HCT116 (cell line): ENCODE measurements at regions of chr16 and their contacts with region 1.

Region 1: DNA sequence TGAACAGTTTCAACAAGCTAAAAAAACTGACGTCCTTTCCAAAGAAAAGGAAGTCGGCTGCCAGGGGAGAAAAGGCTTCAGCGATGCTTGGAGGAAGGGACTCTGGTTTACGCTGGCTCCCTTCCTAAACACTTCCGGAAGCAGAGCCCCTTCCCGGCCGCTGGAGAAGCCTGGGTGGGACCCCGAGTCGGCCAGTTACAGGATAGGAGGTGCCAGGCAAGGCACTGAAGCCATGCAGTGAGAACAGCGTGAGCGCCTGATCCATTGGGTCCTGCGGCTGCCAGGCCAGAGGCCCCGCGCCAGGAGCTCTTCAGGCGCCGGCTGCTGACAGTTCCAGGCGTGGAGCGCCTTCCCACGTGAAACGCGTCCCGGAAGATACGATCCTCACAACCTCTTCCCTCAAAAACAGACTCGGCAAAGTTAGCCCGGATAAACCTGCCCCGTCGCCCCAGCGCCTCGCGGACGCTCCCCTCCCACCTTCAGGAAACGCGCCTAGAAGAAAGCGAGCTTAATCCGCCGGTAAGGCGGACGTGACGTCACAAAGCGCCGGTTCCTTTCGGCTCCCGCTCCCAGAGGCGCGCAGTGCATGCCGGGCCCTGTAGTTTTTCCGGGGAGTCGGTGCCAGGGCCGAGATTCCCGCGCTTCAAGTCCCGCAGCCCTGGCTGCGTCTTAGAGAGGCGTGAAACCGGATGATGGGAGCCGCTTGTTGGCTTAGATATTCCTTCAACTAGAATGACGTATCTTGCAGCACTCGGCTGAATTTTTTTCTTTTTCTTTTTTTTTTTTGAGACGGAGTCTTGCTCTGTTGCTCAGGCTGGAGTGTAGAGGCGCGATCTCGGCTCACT is at the start of gene ADAT1:
- DNase-seq: peak; percentile 96
- ATAC-seq: peak; percentile 95
- H3K4me3 ChIP-seq: peak within 1 kb of the TSS; percentile 75 to 79
- H3K27ac ChIP-seq: peak within 1 kb of the TSS; percentile 86
- H3K4me1 ChIP-seq: peaks cover 8 to 19% of the 10 kb centered on the region in 2 experiments
- H3K27me3 ChIP-seq: no peaks in the 10 kb centered on the region
- CTCF ChIP-seq: no peak
- POLR2A ChIP-seq: peak; percentile 78
- RAD21 ChIP-seq: no peak
- total RNA-seq, gene ADAT1: 44.2 TPM

Region 2: GRCh38 chr16:75555707-75556430 is 67.1 kb before region 1 on chr16 and contains the start of gene TMEM231:
- CTCF ChIA-PET with region 1: no interaction called
- POLR2A ChIA-PET with region 1: no interaction called
- RAD21 ChIA-PET with region 1: no interaction called
- intact Hi-C with region 1: loop called (anchors 5 kb)
- DNase-seq: peak; percentile 84
- ATAC-seq: peak; percentile 87
- H3K4me3 ChIP-seq: peak within 1 kb of the TSS; percentile 80 to 86
- H3K27ac ChIP-seq: peak within 1 kb of the TSS; percentile 73
- H3K4me1 ChIP-seq: peaks cover 10 to 21% of the 10 kb centered on the region in 2 experiments; a peak in 3 of 4 replicates
- H3K27me3 ChIP-seq: no peaks in the 10 kb centered on the region
- CTCF ChIP-seq: no peak
- POLR2A ChIP-seq: no peak
- RAD21 ChIP-seq: no peak
- total RNA-seq, gene TMEM231: 9.7 TPM

Region 3: DNA sequence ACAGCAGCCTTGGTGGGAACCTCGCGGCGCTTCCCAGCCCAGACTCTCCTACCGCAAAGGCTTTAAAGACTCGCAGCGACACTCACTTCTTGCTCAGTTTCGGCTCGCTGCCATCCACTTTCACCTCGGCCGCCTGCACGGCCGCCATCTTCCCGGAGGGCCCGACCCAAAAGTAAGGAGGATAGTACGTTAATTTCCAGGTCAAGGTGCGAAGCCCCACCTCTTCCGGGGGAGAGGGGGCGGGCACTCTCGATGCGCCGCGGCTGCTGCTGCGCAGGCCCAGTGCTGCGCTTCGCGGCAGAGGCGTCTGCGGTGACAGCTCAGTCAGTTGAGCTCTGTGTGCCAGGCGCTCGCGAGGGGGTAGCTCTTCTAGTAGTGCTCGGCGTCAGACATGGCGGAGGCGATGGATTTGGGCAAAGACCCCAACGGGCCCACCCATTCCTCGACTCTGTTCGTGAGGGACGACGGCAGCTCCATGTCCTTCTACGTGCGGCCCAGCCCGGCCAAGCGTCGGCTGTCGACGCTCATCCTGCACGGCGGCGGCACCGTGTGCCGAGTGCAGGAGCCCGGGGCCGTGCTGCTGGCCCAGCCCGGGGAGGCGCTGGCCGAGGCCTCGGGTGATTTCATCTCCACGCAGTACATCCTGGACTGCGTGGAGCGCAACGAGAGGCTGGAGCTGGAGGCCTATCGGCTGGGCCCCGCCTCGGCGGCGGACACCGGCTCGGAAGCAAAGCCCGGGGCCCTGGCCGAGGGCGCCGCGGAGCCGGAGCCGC is 24.7 kb after region 1 on chr16 and contains the starts of genes KARS1 and TERF2IP:
- CTCF ChIA-PET with region 1: no interaction called
- POLR2A ChIA-PET with region 1: interaction called, 12 read pairs
- RAD21 ChIA-PET with region 1: no interaction called
- intact Hi-C with region 1: loop called (anchors 2 kb)
- DNase-seq: peak; percentile 82
- ATAC-seq: peak; percentile 94
- H3K4me3 ChIP-seq: peak within 1 kb of the TSS; percentile 90 to 94
- H3K27ac ChIP-seq: peak within 1 kb of the TSS; percentile 89
- H3K4me1 ChIP-seq: peaks cover 8 to 28% of the 10 kb centered on the region in 2 experiments
- H3K27me3 ChIP-seq: no peaks in the 10 kb centered on the region
- CTCF ChIP-seq: no peak
- POLR2A ChIP-seq: peak; percentile 93
- RAD21 ChIP-seq: no peak
- total RNA-seq, gene KARS1: 196 TPM
- total RNA-seq, gene TERF2IP: 36.4 TPM